A673 (cell line): ENCODE measurements at regions of chr4 and their contacts with region 1.

Region 1: GRCh38 chr4:9762823-9763475 is 18.5 kb upstream of the DRD5 start:
- DNase-seq: peak; percentile 74
- H3K4me3 ChIP-seq: no peak overlapping the region
- H3K27ac ChIP-seq: no peak overlapping the region
- H3K4me1 ChIP-seq: no peaks in the 10 kb centered on the region
- H3K27me3 ChIP-seq: no peaks in the 10 kb centered on the region
- CTCF ChIP-seq: peak; percentile 62

Region 2: DNA sequence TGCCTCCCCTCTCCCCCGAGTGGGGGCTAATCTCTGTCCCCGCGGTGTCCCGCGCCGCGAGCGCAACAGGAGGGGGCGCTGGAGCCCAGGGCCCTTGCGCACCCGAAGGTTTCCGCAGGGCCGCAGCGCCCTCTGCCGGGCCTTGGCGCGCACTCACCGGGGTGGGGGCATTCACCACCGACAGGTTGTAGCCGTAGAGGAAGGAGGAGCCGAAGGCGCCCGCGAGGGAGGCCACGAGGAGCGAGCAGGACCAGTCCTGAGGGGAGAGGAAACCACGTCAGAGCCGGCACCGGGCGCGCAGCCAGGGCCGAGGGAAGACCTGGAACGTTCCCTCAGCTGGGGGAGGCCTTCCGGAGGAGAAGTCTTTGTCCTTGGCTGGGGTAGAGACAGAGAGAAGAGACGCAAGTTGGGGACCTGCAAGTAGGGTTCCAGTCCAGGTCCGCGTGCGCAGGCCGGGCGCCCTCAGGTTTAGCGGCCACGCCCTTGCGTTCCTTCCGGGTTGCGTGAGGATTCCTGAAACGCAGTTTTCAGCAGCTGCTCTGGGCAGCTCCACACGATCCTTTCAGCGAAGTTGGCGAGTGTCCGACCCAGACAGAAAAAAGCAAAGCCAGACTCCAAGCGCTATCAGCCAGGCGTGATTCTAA is 256.0 kb after region 1 on chr4:
- CTCF ChIA-PET with region 1: interaction called, 4 read pairs
- POLR2A ChIA-PET with region 1: no interaction called
- intact Hi-C with region 1: loop called (anchors 1 kb)
- DNase-seq: peak; percentile 86
- H3K4me3 ChIP-seq: peak overlapping the region; percentile 13
- H3K27ac ChIP-seq: no peak overlapping the region
- H3K4me1 ChIP-seq: no peaks in the 10 kb centered on the region
- H3K27me3 ChIP-seq: no peaks in the 10 kb centered on the region
- CTCF ChIP-seq: peak; percentile 96

Region 3: DNA sequence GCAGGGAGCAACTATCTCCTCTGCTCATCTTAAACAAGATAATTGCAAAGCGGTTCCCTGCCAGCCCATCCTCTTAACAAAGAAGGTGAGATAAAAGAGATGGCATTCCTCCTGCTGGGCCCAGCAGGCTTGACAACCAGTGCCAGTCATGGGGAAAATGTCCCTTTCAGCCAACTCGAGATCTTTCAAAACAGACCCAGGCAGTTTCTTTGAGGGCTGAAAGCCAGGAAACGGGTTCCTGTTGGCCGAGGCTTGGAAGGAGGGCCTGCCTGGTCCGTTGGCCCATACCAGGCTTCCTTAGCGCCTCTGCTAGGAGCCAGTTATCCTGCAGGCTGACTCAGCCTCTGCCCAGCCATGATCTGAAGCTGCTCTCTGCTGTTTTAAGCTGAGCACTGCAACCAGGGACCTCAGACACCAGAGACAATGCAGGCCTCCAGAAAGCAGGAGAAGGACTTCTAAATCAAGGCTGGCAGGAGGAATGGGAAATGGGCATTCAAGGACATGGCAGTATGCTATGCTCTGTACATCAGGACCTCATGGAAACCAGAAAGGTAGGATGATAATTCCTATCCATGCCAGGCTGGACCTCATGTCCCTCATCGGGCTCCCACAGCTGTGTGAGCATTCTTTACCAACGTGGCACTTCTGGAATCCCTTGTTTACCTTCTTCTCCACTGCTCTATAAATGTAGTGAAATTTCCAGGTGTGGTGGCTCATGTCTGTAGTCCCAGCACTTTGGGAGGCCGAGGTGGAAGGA is 300.8 kb after region 1 on chr4:
- CTCF ChIA-PET with region 1: no interaction called
- POLR2A ChIA-PET with region 1: no interaction called
- intact Hi-C with region 1: loop called (anchors 1 kb)
- DNase-seq: peak; percentile 67
- H3K4me3 ChIP-seq: no peak overlapping the region
- H3K27ac ChIP-seq: no peak overlapping the region
- H3K4me1 ChIP-seq: no peaks in the 10 kb centered on the region
- H3K27me3 ChIP-seq: no peaks in the 10 kb centered on the region
- CTCF ChIP-seq: peak; percentile 45

Region 4: GRCh38 chr4:10157478-10158332 is 394.8 kb after region 1 on chr4:
- CTCF ChIA-PET with region 1: no interaction called
- POLR2A ChIA-PET with region 1: no interaction called
- intact Hi-C with region 1: loop called (anchors 5 kb)
- DNase-seq: peak; percentile 75
- H3K4me3 ChIP-seq: no peak overlapping the region
- H3K27ac ChIP-seq: no peak overlapping the region
- H3K4me1 ChIP-seq: no peaks in the 10 kb centered on the region
- H3K27me3 ChIP-seq: peaks cover 34% of the 10 kb centered on the region
- CTCF ChIP-seq: peak; percentile 78

Region 5: GRCh38 chr4:10554694-10555093 is 791.7 kb after region 1 on chr4:
- CTCF ChIA-PET with region 1: no interaction called
- POLR2A ChIA-PET with region 1: no interaction called
- intact Hi-C with region 1: loop called (anchors 10 kb)
- DNase-seq: peak; percentile 62
- H3K4me3 ChIP-seq: no peak overlapping the region
- H3K27ac ChIP-seq: no peak overlapping the region
- H3K4me1 ChIP-seq: no peaks in the 10 kb centered on the region
- H3K27me3 ChIP-seq: no peaks in the 10 kb centered on the region
- CTCF ChIP-seq: peak; percentile 78